Dorsolateral prefrontal cortex (tissue), 120 donors: ENCODE measurements at regions of chr9 and their contacts with region 1.

Region 1: DNA sequence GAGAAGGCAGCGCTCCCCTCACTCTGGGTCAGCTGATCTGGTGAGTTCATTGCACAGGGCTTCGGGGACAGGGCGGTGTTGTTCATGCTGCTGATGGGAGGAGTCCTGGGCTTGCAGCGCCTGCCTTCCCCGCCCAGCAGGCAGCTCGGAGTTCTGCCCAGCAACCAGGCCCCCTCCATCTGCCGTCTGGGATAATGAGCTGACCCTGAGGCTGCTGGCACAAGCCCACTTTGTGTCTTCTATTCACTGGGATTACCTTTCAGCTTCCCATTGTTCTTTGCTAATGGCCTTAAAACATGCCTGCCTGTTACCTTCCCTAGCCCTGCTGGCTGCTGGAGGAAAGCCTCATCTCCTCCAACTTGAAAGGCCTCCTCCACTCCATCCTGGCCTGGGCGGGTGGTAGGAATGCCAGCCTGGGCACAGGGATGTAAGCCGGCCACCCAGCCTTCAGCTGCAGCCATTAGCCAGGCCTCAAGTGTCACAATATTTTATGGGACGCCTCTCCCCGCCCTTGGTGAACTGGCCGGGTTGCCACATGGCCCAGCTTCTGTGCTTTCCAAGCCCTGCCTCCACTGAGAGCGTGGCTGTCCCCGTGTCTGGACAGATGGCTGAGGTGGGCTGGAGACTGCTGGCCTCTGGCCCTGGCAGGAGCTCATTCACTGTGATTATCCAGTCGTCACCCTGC is 70.4 kb downstream of the GADD45G start:
- DNase-seq: peak in 7 of 10 donors; percentile 49 to 80 (median 65)
- H3K4me3 ChIP-seq: peak overlapping the region in 2 of 59 donors; percentile 8 to 18
- H3K27ac ChIP-seq: peak overlapping the region in 36 of 59 donors; percentile 3 to 85 (median 66)
- H3K27me3 ChIP-seq: no peaks in the 10 kb centered on the region
- CTCF ChIP-seq: peak in 1 of 56 donors; percentile 4

Region 2: DNA sequence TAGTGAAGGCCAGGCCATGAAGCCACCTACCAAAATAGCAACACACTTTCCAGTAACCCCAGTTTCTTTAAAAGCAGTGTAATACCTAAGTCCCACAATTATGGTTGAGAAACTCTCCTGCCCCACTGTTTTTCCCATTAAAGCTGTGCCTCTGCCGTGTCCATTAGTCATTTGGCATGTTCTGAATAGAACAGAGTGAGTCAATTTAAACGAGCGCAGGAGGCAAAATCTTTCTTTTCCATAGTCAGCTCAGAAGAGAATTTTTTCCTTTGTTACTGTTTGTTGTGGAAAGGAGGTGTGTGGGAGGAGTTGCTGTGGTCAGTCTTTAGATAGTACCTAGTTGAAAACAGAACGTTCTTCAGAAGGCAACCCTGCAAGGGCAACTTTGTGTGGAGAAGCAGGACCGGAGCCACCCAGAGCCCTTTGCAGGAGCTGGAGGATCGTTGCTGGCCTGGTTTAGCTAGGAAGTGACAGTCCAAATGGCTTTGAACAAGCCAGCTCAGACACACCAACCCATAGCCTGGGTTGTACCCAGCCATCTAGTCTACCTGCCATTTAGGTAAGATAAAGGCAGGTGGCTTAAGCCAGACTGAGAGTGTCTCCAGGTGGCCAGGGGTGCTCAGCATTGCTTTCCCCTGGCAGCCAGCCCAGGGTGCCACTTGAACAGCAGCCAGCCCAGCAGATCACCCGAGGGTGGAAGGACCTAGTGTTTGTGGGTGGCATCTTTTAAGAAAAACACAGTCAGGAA is 40.0 kb before region 1 on chr9:
- intact Hi-C with region 1: no loop called
- DNase-seq: peak in 1 of 10 donors; percentile 42
- H3K4me3 ChIP-seq: no peak overlapping the region
- H3K27ac ChIP-seq: peak overlapping the region in 4 of 59 donors; percentile 39 to 57 (median 46)
- H3K27me3 ChIP-seq: no peaks in the 10 kb centered on the region
- CTCF ChIP-seq: no peak

Region 3: DNA sequence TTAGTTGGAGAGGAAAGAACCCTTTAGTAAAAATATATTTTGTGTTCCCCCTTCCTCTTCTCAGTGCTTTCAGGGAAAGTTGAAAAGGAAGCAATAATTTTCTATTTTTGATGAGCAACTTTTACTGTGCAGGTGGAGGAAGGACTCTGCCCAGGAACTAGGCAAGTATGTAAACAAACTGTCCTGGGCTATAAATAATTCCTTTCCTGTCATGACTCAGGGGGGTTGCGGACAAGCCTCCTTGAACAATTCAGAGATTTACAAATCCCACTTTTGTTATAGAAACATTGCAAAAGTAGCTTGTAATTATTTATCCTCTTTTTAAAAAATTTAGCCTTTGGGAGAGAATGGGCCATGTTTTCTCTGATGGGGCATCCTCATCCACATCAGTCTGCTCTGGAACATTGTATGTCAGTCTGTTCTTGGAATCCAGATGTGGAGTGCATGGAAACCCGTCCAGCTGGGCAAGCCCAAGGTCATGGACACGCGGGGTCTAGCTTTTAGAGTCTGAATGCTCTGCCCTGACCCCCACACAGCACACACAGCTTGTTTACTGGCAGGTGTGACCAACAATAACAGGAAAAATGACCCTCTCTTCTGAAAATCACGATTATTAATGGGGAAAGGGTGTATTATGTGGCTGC is 57.2 kb after region 1 on chr9:
- intact Hi-C with region 1: no loop called
- DNase-seq: no peak
- H3K4me3 ChIP-seq: no peak overlapping the region
- H3K27ac ChIP-seq: no peak overlapping the region
- H3K27me3 ChIP-seq: no peaks in the 10 kb centered on the region
- CTCF ChIP-seq: no peak

Region 4: DNA sequence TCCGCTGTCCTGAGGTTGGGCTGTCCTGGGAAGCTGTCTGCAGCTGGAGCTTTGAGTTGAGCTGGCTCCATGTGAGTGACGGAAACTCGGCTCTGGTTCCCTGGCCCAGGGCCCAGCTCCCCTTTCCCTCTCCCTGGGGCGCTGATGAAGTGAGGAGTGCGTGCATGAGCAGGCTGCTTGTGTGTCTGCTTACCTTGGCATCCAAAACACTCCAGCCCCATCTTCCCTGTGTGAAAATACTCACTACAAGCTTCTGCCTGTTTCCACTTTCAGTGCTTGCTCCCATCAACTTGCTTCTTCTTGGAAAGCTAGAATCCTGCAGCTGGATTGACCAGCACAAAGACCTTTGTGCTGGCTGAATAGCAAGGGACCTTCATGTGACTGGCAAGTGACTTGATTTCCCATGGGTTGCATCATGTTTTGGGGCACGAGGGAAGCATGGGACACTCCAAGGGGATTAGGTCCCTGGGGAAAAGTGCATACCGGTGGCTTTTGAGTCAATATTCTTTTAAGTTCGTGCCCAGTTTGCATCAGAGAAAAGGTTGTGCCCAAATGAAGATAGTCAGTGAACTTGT is 127.7 kb after region 1 on chr9:
- intact Hi-C with region 1: loop called in 1 of 2 experiments (anchors 5 kb)
- DNase-seq: peak in 3 of 10 donors; percentile 48 to 63 (median 54)
- H3K4me3 ChIP-seq: peak overlapping the region in 35 of 59 donors; percentile 1 to 57 (median 25)
- H3K27ac ChIP-seq: peak overlapping the region in 48 of 59 donors; percentile 7 to 79 (median 54)
- H3K27me3 ChIP-seq: no peaks in the 10 kb centered on the region
- CTCF ChIP-seq: no peak